ENCODE measurements at regions of chr10 and their contacts with region 1.

Region 1: DNA sequence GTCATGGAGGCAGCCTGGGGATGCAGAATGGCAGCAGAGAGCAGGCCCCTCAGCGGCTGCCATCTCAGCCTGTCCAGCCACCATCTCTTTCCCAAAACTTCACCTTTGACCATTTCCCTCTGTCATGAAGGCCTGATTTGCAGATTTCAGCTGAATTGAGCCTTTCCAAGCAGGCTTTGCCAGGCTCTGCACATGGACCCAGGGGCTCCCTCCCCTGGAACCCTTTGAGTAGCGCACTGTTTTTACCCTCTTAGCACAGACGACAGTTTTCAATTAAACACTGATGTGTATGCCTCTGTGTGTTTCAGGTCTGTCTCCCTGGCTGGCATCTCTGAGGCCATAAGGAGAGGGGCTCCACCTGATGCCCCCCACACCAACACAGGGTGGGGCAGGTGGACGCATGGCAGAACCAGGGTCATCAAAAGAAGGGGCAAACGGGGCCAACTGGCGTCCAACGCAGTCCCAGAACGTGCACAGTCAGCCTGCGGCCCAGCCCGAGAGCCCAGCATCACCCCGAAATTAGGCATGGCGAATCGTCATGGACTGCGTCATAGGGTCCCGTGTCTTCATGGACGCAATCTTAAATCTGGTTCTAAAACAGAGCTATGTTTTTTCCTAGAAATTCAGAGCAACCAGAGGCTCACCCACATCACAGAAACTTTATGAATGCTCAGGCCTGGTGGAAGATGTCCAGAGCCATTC is 185.0 kb upstream of the TCERG1L start:
- DNase-seq: no peak
- H3K4me3 ChIP-seq: no peak overlapping the region
- H3K27ac ChIP-seq: no peak overlapping the region
- H3K4me1 ChIP-seq: no peaks in the 10 kb centered on the region
- H3K27me3 ChIP-seq: no peaks in the 10 kb centered on the region
- CTCF ChIP-seq: no peak

Region 2: DNA sequence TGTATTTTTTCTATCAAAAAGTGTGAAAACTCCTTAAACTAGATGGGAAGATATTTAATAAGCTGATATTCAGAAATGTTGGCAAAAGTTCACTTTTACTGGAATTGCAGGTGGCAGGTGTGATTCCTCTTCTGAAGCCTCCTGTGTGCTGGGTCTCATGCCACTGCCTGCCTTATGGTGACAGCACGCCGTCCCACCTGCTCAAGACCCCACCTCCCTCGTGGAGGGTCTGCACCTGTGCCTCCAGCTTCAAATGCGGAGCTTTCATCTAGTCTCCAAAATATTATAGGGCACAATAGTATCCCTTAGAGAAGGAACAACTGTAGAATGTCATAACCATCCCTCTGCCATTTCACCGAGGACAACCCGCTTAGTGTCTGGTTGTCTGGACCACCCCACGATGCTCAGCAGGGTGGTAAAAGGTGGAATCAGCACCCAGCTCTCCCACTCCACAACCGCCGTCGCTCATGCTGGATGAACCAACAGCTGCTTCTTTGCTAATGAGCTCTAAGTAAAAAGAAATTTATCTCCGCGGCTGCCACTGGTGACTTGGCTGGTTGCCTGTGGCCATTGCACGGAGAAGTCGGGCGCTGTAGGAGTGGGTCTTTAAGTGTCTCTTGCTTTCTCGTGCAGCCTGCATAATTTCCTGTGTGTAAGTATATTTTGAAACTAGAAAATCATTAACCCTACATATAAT is 65.6 kb before region 1 on chr10:
- CTCF ChIA-PET with region 1: no interaction called
- dilution Hi-C with region 1: loop called (anchors 5 kb)
- in situ Hi-C with region 1: no loop called
- intact Hi-C with region 1: no loop called
- DNase-seq: no peak
- H3K4me3 ChIP-seq: no peak overlapping the region
- H3K27ac ChIP-seq: no peak overlapping the region
- H3K4me1 ChIP-seq: no peaks in the 10 kb centered on the region
- H3K27me3 ChIP-seq: no peaks in the 10 kb centered on the region
- CTCF ChIP-seq: no peak

Region 3: GRCh38 chr10:131461093-131461492 is 35.4 kb before region 1 on chr10:
- CTCF ChIA-PET with region 1: no interaction called
- dilution Hi-C with region 1: no loop called
- in situ Hi-C with region 1: no loop called
- intact Hi-C with region 1: no loop called
- DNase-seq: no peak
- H3K4me3 ChIP-seq: no peak overlapping the region
- H3K27ac ChIP-seq: no peak overlapping the region
- H3K4me1 ChIP-seq: no peaks in the 10 kb centered on the region
- H3K27me3 ChIP-seq: no peaks in the 10 kb centered on the region
- CTCF ChIP-seq: no peak

Region 4: GRCh38 chr10:131546086-131546810 is 49.7 kb after region 1 on chr10:
- CTCF ChIA-PET with region 1: no interaction called
- dilution Hi-C with region 1: no loop called
- in situ Hi-C with region 1: no loop called
- intact Hi-C with region 1: no loop called
- DNase-seq: no peak
- H3K4me3 ChIP-seq: no peak overlapping the region
- H3K27ac ChIP-seq: no peak overlapping the region
- H3K4me1 ChIP-seq: no peaks in the 10 kb centered on the region
- H3K27me3 ChIP-seq: no peaks in the 10 kb centered on the region
- CTCF ChIP-seq: no peak

Region 5: GRCh38 chr10:131588704-131589220 is 92.3 kb after region 1 on chr10:
- CTCF ChIA-PET with region 1: no interaction called
- dilution Hi-C with region 1: no loop called
- in situ Hi-C with region 1: no loop called
- intact Hi-C with region 1: no loop called
- DNase-seq: no peak
- H3K4me3 ChIP-seq: no peak overlapping the region
- H3K27ac ChIP-seq: no peak overlapping the region
- H3K4me1 ChIP-seq: no peaks in the 10 kb centered on the region
- H3K27me3 ChIP-seq: no peaks in the 10 kb centered on the region
- CTCF ChIP-seq: no peak